Activated naive CD4-positive, alpha-beta T cell treated with anti-CD3 and anti-CD28 coated beads for 36 hours (primary cell): ENCODE measurements at regions of chr5 and their contacts with region 1.

Region 1: DNA sequence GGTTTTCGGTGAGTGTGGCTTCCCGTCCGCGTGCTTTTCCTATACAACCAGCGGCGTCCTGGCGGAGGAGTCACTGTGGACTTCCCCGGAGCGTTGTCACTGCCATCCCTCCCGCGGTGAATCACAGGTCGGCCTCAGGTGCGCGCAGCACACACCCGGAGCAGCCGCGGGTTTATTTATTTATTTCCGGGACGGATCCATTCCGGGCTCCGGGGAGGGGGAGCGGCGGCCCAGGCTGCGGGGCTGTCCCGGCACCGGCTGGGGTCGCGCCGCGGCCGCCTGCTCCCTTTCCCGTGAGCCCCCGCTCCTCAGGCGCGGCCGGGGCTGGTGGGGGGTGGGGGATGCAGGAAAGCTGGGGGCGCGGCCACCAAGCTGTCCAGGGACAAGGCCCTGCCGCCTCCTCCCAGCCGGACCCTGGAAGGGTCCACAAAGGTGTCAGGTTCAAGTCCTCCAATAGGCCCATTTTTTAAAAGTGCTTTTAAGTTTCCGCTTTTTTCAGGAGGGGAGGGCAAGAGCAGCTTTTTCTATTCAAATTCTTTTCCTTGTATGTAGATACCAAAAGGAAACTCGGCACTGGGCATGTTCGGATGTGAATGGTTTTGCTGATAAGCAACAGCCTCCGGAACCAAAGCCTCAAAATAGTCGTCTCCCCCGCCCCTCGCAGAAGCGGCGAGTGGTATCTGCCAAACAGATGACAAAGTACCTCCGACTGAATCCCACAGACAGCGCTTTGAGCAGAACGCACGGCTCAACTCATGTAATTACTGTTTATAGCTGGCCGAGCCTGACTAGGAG is 192.5 kb downstream of the CD180 start:
- DNase-seq: peak; percentile 96
- H3K4me3 Mint-ChIP-seq: peak overlapping the region; percentile 94
- H3K27ac Mint-ChIP-seq: peak overlapping the region; percentile 97
- H3K4me1 Mint-ChIP-seq: peaks cover 58% of the 10 kb centered on the region
- H3K27me3 Mint-ChIP-seq: no peaks in the 10 kb centered on the region

Region 2: DNA sequence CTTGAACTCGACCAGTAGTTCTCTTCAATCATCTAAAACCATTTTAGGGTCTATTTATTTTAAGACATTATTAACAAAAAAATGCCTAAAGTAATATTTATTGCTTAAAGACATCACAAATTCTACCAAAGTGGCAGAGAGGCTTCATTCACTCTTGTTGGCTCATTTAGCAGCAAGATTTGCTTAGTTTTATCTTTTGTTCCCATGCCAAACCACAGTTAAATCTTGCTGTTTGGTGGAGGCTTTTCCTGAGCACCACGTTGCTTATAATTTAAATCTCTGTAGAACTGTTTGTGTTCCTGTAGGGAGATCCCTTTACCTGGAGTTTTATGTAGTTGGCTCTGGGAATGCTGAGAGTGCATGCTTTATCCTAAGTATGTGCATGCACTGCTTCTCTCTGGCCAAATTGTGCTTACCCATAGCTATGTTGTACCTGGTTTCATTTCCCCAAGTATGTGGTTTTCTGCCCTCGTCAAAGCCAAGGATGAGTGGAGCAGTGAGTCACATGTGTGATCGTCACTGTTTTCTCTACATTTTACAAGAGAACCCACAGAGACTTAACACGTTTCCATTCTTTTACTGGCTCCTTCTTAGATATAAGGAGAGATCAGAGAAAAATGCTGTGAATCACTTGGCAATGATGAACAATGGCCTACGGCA is 450.1 kb before region 1 on chr5:
- CTCF ChIA-PET with region 1: no interaction called
- intact Hi-C with region 1: loop called (anchors 1 kb)
- DNase-seq: peak; percentile 77
- H3K4me3 Mint-ChIP-seq: no peak overlapping the region
- H3K27ac Mint-ChIP-seq: peak overlapping the region; percentile 13
- H3K4me1 Mint-ChIP-seq: peaks cover 29% of the 10 kb centered on the region
- H3K27me3 Mint-ChIP-seq: peaks cover 22% of the 10 kb centered on the region

Region 3: GRCh38 chr5:66987949-66988838 is 15.9 kb before region 1 on chr5:
- CTCF ChIA-PET with region 1: interaction called, 8 read pairs
- intact Hi-C with region 1: loop called (anchors 1 kb)
- DNase-seq: no peak
- H3K4me3 Mint-ChIP-seq: no peak overlapping the region
- H3K27ac Mint-ChIP-seq: no peak overlapping the region
- H3K4me1 Mint-ChIP-seq: peaks cover 8% of the 10 kb centered on the region
- H3K27me3 Mint-ChIP-seq: no peaks in the 10 kb centered on the region

Region 4: GRCh38 chr5:67065237-67065636 is 61.1 kb after region 1 on chr5:
- CTCF ChIA-PET with region 1: no interaction called
- intact Hi-C with region 1: loop called (anchors 1 kb)
- DNase-seq: peak; percentile 47
- H3K4me3 Mint-ChIP-seq: no peak overlapping the region
- H3K27ac Mint-ChIP-seq: peak overlapping the region; percentile 72
- H3K4me1 Mint-ChIP-seq: peaks cover 25% of the 10 kb centered on the region
- H3K27me3 Mint-ChIP-seq: no peaks in the 10 kb centered on the region

Region 5: DNA sequence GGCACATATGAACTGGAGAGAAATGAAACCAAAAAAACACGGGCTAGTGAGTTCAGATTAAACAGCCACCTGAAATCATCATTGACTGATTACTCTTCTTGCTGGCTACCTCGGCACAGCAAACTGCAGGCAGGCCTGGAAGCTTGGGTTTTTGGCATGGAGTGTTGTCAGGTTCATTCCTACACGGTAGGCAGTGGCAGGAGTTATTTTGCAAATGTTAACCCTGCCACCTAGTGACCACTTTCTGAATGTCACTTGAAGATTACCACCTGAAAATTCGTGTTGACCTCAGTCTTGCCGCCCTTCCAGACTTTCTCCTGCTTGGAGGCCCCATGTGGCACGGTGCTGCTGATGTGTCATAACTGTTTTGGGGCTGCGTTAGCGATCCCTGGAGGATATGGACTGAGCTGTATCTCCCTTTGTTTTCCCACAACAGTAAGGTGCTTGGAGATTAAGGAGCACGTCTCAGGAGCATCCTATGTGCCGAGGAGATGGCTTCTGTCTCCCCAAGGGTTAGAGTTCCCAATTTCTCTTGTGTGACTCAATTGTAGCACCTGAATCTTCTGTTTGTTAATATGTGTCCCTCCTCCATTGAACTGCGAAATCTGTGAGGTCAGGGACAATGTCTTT is 205.1 kb after region 1 on chr5:
- CTCF ChIA-PET with region 1: no interaction called
- intact Hi-C with region 1: loop called (anchors 1 kb)
- DNase-seq: peak; percentile 79
- H3K4me3 Mint-ChIP-seq: no peak overlapping the region
- H3K27ac Mint-ChIP-seq: peak overlapping the region; percentile 50
- H3K4me1 Mint-ChIP-seq: peaks cover 56% of the 10 kb centered on the region
- H3K27me3 Mint-ChIP-seq: no peaks in the 10 kb centered on the region

Region 6: DNA sequence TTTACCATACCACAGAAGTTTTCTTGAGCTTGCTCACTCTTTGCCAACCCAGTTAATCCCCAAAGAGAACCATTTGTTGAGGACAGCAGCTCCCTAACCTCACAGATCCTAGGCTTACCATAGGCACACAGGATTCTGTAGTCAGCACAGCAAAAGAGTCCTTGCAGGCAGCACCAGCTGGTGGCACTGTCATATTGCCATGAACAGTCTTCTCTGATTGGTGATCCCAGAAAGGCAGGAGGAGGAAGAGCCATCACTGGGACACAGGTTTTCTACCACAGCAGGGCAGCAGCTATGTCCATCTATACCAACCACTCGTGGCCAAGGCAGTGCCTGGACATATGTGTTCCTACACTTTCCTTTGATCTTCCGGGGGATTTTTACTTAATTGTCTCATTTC is 489.5 kb after region 1 on chr5:
- CTCF ChIA-PET with region 1: no interaction called
- intact Hi-C with region 1: no loop called
- DNase-seq: peak; percentile 38
- H3K4me3 Mint-ChIP-seq: no peak overlapping the region
- H3K27ac Mint-ChIP-seq: no peak overlapping the region
- H3K4me1 Mint-ChIP-seq: no peaks in the 10 kb centered on the region
- H3K27me3 Mint-ChIP-seq: no peaks in the 10 kb centered on the region